ENCODE measurements at regions of chr12 and their contacts with region 1.

Region 1: GRCh38 chr12:122123051-122123760 is 44.6 kb downstream of the MLXIP start:
- DNase-seq: peak; percentile 84
- ATAC-seq: peak; percentile 80
- H3K4me3 Mint-ChIP-seq: no peak overlapping the region
- H3K27ac Mint-ChIP-seq: peak overlapping the region; percentile 61
- H3K4me1 Mint-ChIP-seq: peaks cover 42% of the 10 kb centered on the region
- H3K27me3 Mint-ChIP-seq: no peaks in the 10 kb centered on the region
- CTCF ChIP-seq: peak; percentile 88

Region 2: DNA sequence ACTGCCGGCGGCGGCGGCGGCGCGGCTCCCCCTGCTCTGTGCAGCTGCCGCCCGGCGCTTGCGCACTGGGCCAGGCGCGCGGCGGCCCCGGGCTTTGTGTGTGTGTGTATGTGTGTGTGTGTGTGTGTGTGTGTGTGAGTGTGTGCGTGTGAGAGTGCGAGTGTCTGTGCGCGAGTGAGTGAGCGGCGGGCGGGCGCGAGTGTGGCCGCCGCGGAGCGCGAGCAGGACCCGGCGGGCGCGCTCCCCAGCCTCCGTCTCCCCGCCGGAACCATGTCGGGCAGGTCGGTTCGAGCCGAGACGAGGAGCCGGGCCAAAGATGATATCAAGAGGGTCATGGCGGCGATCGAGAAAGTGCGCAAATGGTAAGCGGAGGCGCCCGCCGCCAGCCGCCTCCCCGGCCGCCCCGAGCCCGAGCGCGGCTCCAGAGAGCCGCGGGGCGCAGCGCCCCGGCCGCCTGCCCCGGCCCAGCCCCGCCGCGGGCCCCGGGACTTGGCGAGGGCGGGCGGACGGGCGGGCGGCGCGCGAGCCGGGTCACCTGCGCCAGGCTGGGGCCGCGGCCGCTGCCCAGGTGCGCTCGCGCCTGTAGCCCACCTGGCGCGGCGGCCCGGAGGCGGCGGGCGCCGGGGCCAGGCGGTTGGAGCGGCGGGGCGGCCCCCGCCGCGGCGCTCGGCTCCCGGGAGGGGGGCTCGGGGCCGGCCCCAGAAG is 101.2 kb before region 1 on chr12 and contains the start of gene BCL7A:
- CTCF ChIA-PET with region 1: no interaction called
- POLR2A ChIA-PET with region 1: no interaction called
- intact Hi-C with region 1: no loop called
- DNase-seq: peak; percentile 70
- ATAC-seq: peak; percentile 85
- H3K4me3 Mint-ChIP-seq: peak within 1 kb of the TSS; percentile 92
- H3K27ac Mint-ChIP-seq: peak within 1 kb of the TSS; percentile 87
- H3K4me1 Mint-ChIP-seq: peaks cover 11% of the 10 kb centered on the region
- H3K27me3 Mint-ChIP-seq: peaks cover 13% of the 10 kb centered on the region
- CTCF ChIP-seq: no peak
- total RNA-seq, gene BCL7A: 6.7 to 7.3 TPM

Region 3: GRCh38 chr12:122051231-122051876 is 71.9 kb before region 1 on chr12:
- CTCF ChIA-PET with region 1: interaction called, 103 read pairs
- POLR2A ChIA-PET with region 1: interaction called, 9 read pairs
- intact Hi-C with region 1: loop called (anchors 2 kb)
- DNase-seq: no peak
- ATAC-seq: no peak
- H3K4me3 Mint-ChIP-seq: no peak overlapping the region
- H3K27ac Mint-ChIP-seq: no peak overlapping the region
- H3K4me1 Mint-ChIP-seq: peaks cover 4% of the 10 kb centered on the region
- H3K27me3 Mint-ChIP-seq: no peaks in the 10 kb centered on the region
- CTCF ChIP-seq: no peak

Region 4: GRCh38 chr12:122078141-122079032 is 44.8 kb before region 1 on chr12 and contains the start of gene MLXIP:
- CTCF ChIA-PET with region 1: interaction called, 42 read pairs
- POLR2A ChIA-PET with region 1: interaction called, 3 read pairs
- intact Hi-C with region 1: loop called (anchors 5 kb)
- DNase-seq: peak; percentile 92
- ATAC-seq: peak; percentile 84
- H3K4me3 Mint-ChIP-seq: peak within 1 kb of the TSS; percentile 78
- H3K27ac Mint-ChIP-seq: peak within 1 kb of the TSS; percentile 73
- H3K4me1 Mint-ChIP-seq: peaks cover 39% of the 10 kb centered on the region
- H3K27me3 Mint-ChIP-seq: no peaks in the 10 kb centered on the region
- CTCF ChIP-seq: no peak
- total RNA-seq, gene MLXIP: 26.0 to 28.7 TPM

Region 5: DNA sequence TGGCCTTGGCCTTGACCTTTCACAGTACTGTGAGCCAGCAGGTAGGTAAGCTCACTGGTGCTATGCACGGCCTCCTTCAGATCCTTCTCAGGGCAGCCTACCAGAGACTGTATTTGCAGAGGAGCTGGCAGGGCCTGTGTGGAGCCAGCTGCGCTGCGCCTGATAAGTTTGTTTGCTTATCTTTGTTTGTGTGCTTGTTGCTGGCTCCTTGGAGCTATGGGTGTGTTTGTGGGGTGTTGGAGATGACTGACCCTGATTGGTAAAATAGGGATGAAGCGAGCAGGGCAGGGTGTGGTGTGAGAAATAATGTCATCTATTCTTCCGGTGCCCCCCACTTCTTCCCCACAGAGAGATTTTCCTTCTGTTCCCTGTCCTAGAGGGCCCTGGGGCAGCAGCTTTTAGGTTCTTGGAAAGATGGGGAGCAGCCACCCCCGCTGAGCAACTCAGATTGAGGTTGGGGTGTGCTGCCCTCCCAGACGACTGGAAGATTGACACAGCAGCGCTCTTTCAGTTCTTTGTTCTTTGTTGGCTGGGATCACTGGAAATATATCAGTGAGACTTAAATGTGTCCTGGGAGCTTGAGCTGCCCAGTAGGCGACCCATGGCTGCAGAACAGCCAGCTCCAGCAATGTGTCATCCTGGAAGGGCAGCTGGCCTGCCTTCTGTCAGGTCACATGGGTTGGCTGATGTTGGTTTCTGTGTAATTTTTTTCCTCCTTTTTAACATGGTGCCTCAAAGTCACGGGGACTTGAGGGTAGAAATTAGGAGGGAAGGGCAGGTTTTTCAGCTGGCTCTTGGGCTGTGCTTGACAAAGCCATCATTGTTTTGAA is 25.1 kb before region 1 on chr12:
- CTCF ChIA-PET with region 1: interaction called, 15 read pairs
- POLR2A ChIA-PET with region 1: interaction called, 3 read pairs
- intact Hi-C with region 1: no loop called
- DNase-seq: no peak
- ATAC-seq: peak; percentile 46
- H3K4me3 Mint-ChIP-seq: no peak overlapping the region
- H3K27ac Mint-ChIP-seq: peak overlapping the region; percentile 63
- H3K4me1 Mint-ChIP-seq: peaks cover 61% of the 10 kb centered on the region
- H3K27me3 Mint-ChIP-seq: no peaks in the 10 kb centered on the region
- CTCF ChIP-seq: no peak

Region 6: DNA sequence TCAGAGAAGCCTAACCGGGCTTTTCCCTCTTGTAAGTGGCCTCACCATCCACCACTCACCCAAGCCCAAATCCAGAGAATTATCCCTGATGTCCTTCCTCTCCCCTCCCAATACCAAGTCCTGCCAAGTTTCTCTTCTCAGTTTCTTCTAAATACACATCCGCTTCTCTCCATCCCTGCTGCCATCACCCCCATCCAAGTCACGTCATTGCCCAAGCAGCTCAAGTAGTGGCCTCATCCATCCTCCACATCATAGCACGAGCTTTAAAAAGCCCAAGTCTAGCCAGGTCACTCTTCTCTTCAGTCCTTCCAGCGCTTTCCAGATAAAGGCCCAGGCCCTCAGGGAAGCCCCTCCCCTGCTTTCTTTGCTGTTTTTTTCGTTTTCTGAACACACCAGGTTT is 25.5 kb after region 1 on chr12:
- CTCF ChIA-PET with region 1: interaction called, 12 read pairs
- POLR2A ChIA-PET with region 1: no interaction called
- intact Hi-C with region 1: no loop called
- DNase-seq: no peak
- ATAC-seq: no peak
- H3K4me3 Mint-ChIP-seq: no peak overlapping the region
- H3K27ac Mint-ChIP-seq: no peak overlapping the region
- H3K4me1 Mint-ChIP-seq: no peaks in the 10 kb centered on the region
- H3K27me3 Mint-ChIP-seq: no peaks in the 10 kb centered on the region
- CTCF ChIP-seq: no peak